CD8-positive, alpha-beta memory T cell (primary cell): ENCODE measurements at regions of chr3 and their contacts with region 1.

Region 1: GRCh38 chr3:196609343-196609775 is 30.1 kb upstream of the NRROS start:
- DNase-seq: peak; percentile 81 to 95 (median 92)
- H3K4me3 ChIP-seq: no peak overlapping the region
- H3K4me3 Mint-ChIP-seq: peak overlapping the region in 6 of 7 donors; percentile 48 to 80 (median 74)
- H3K27ac ChIP-seq: no peak overlapping the region
- H3K27ac Mint-ChIP-seq: peak overlapping the region; percentile 82 to 98 (median 90)
- H3K4me1 ChIP-seq: peaks cover 34% of the 10 kb centered on the region
- H3K4me1 Mint-ChIP-seq: peaks cover 36 to 40% (median 39%) of the 10 kb centered on the region in 3 donors
- H3K27me3 ChIP-seq: no peaks in the 10 kb centered on the region
- H3K27me3 Mint-ChIP-seq: no peaks in the 10 kb centered on the region

Region 2: GRCh38 chr3:196632046-196632751 is 22.8 kb after region 1 on chr3:
- CTCF ChIA-PET with region 1: interaction called, 27 read pairs
- POLR2A ChIA-PET with region 1: interaction called, 20 read pairs
- DNase-seq: peak; percentile 82 to 94 (median 92)
- H3K4me3 ChIP-seq: peak overlapping the region; percentile 66
- H3K4me3 Mint-ChIP-seq: peak overlapping the region; percentile 81 to 93 (median 84)
- H3K27ac ChIP-seq: peak overlapping the region; percentile 73
- H3K27ac Mint-ChIP-seq: peak overlapping the region; percentile 88 to 96 (median 96)
- H3K4me1 ChIP-seq: peaks cover 36% of the 10 kb centered on the region
- H3K4me1 Mint-ChIP-seq: peaks cover 46 to 60% (median 54%) of the 10 kb centered on the region in 3 donors
- H3K27me3 ChIP-seq: no peaks in the 10 kb centered on the region
- H3K27me3 Mint-ChIP-seq: no peaks in the 10 kb centered on the region

Region 3: GRCh38 chr3:196639483-196640296 is 30.3 kb after region 1 on chr3 and contains the start of gene NRROS:
- CTCF ChIA-PET with region 1: interaction called, 17 read pairs
- POLR2A ChIA-PET with region 1: no interaction called
- DNase-seq: peak; percentile 38 to 73 (median 50)
- H3K4me3 ChIP-seq: peak within 1 kb of the TSS; percentile 86
- H3K4me3 Mint-ChIP-seq: peak within 1 kb of the TSS; percentile 71 to 98 (median 86)
- H3K27ac ChIP-seq: peak within 1 kb of the TSS; percentile 71
- H3K27ac Mint-ChIP-seq: peak within 1 kb of the TSS; percentile 69 to 97 (median 93)
- H3K4me1 ChIP-seq: peaks cover 51% of the 10 kb centered on the region
- H3K4me1 Mint-ChIP-seq: peaks cover 61 to 79% (median 76%) of the 10 kb centered on the region in 3 donors
- H3K27me3 ChIP-seq: no peaks in the 10 kb centered on the region
- H3K27me3 Mint-ChIP-seq: no peaks in the 10 kb centered on the region
- total RNA-seq, gene NRROS: 15.6 to 17.0 TPM

Region 4: GRCh38 chr3:196665962-196666867 is 56.9 kb after region 1 on chr3:
- CTCF ChIA-PET with region 1: interaction called, 4 read pairs
- POLR2A ChIA-PET with region 1: interaction called, 11 read pairs
- DNase-seq: no peak
- H3K4me3 ChIP-seq: no peak overlapping the region
- H3K4me3 Mint-ChIP-seq: no peak overlapping the region
- H3K27ac ChIP-seq: no peak overlapping the region
- H3K27ac Mint-ChIP-seq: peak overlapping the region in 2 of 8 donors; percentile 12 to 44
- H3K4me1 ChIP-seq: peaks cover 14% of the 10 kb centered on the region
- H3K4me1 Mint-ChIP-seq: peaks cover 6 to 12% (median 8%) of the 10 kb centered on the region in 3 donors
- H3K27me3 ChIP-seq: no peaks in the 10 kb centered on the region
- H3K27me3 Mint-ChIP-seq: no peaks in the 10 kb centered on the region

Region 5: GRCh38 chr3:196684548-196685407 is 75.4 kb after region 1 on chr3:
- CTCF ChIA-PET with region 1: interaction called, 160 read pairs
- POLR2A ChIA-PET with region 1: interaction called, 8 read pairs
- DNase-seq: peak; percentile 47 to 70 (median 57)
- H3K4me3 ChIP-seq: peak overlapping the region; percentile 52
- H3K4me3 Mint-ChIP-seq: peak overlapping the region; percentile 8 to 76 (median 66)
- H3K27ac ChIP-seq: no peak overlapping the region
- H3K27ac Mint-ChIP-seq: peak overlapping the region; percentile 5 to 83 (median 50)
- H3K4me1 ChIP-seq: peaks cover 11% of the 10 kb centered on the region
- H3K4me1 Mint-ChIP-seq: peaks cover 10 to 15% (median 12%) of the 10 kb centered on the region in 3 donors
- H3K27me3 ChIP-seq: no peaks in the 10 kb centered on the region
- H3K27me3 Mint-ChIP-seq: no peaks in the 10 kb centered on the region

Region 6: GRCh38 chr3:196689941-196690660 is 80.7 kb after region 1 on chr3:
- CTCF ChIA-PET with region 1: interaction called, 160 read pairs
- POLR2A ChIA-PET with region 1: interaction called, 8 read pairs
- DNase-seq: no peak
- H3K4me3 ChIP-seq: no peak overlapping the region
- H3K4me3 Mint-ChIP-seq: no peak overlapping the region
- H3K27ac ChIP-seq: no peak overlapping the region
- H3K27ac Mint-ChIP-seq: peak overlapping the region in 1 of 8 donors; percentile 79
- H3K4me1 ChIP-seq: peaks cover 4% of the 10 kb centered on the region
- H3K4me1 Mint-ChIP-seq: peaks cover 5 to 6% (median 5%) of the 10 kb centered on the region in 3 donors
- H3K27me3 ChIP-seq: no peaks in the 10 kb centered on the region
- H3K27me3 Mint-ChIP-seq: no peaks in the 10 kb centered on the region